Activated B cell treated with CpG ODN at 0.5 μM for 24 hours (primary cell): ENCODE measurements at regions of chr19 and their contacts with region 1.

Region 1: GRCh38 chr19:13774217-13775191 is at the start of gene C19orf53:
- DNase-seq: peak; percentile 86
- ATAC-seq: peak; percentile 99
- H3K4me3 Mint-ChIP-seq: peak within 1 kb of the TSS; percentile 100
- H3K27ac Mint-ChIP-seq: peak within 1 kb of the TSS; percentile 95
- H3K4me1 Mint-ChIP-seq: peaks cover 26% of the 10 kb centered on the region
- H3K27me3 Mint-ChIP-seq: no peaks in the 10 kb centered on the region
- CTCF ChIP-seq: no peak
- total RNA-seq, gene C19orf53: 74.9 and 76.1 TPM in 2 replicates

Region 2: DNA sequence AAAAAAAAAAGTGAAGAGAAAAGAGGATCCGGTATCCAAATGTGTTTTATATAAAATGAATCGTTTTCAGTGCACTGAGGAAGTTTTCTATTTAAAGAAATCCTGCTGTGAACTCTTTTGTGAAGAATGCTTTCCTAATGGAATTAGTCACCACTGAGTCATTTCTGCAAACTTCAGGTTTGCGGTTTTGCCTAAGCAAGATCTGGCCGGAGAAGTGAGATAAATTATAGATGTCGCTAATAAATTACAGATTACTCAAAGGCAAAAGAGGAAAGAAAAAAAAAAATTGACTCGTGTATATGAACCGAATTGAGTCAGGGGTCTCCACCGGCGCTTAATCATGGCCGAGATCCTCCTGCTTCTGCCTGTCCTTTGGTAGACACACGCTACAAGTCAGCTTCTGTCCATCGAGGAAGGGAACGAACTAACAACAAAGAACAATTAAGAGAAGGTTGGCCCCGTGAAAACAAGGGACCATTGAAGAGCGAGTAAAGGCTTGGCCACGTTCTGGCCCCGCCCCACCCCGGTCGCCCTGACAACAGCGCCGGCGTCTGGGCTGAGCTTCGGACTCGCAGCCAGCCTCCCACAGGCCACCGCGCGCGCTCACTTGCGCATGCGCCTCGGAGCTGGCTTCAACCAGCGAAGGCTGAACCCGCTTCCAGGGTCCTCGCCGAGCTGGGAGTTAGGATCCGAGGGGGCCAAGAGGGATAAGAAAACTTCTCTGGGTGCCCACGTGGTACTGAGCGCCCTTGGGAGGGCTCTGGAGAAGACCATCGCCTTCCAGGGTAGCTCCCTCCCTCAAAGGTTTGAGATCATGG is 43.1 kb before region 1 on chr19:
- CTCF ChIA-PET with region 1: no interaction called
- POLR2A ChIA-PET with region 1: interaction called, 8 read pairs
- intact Hi-C with region 1: loop called (anchors 1 kb)
- DNase-seq: peak; percentile 96
- ATAC-seq: peak; percentile 100
- H3K4me3 Mint-ChIP-seq: peak overlapping the region; percentile 90
- H3K27ac Mint-ChIP-seq: peak overlapping the region; percentile 93
- H3K4me1 Mint-ChIP-seq: peaks cover 21% of the 10 kb centered on the region
- H3K27me3 Mint-ChIP-seq: no peaks in the 10 kb centered on the region
- CTCF ChIP-seq: no peak

Region 3: DNA sequence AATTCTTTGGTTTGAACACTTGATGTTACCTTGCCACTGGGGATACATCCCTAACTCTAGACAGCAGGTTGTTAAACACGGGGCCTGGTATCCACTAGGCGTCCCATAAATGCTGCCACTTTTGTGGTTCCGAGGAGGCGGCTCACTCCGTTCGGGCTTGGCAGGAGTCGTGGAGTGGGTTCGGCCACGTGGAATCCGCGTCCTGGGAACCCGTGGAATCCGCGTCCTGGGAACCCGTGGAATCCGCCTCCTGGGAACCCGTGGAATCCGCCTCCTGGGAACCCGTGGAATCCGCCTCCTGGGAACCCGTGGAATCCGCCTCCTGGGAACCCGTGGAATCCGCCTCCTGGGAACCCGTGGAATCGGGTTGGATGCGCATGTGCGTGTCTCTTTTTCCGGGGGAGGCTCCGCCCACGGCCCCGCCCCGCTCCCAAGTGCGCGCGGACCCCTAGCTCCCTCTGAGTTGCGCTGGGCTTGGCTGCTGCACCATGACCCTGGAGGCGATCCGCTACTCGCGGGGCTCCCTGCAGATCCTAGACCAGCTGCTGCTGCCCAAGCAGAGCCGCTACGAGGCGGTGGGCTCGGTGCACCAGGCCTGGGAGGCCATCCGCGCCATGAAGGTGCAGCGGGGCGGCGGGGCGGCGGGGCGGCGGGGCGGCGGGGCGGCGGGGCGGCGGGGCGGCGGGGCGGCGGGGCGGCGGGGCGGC is 10.2 kb before region 1 on chr19 and contains the start of gene MRI1:
- CTCF ChIA-PET with region 1: no interaction called
- POLR2A ChIA-PET with region 1: interaction called, 14 read pairs
- intact Hi-C with region 1: loop called (anchors 1 kb)
- DNase-seq: peak; percentile 70
- ATAC-seq: peak; percentile 84
- H3K4me3 Mint-ChIP-seq: peak within 1 kb of the TSS; percentile 86
- H3K27ac Mint-ChIP-seq: peak within 1 kb of the TSS; percentile 70
- H3K4me1 Mint-ChIP-seq: peaks cover 16% of the 10 kb centered on the region
- H3K27me3 Mint-ChIP-seq: no peaks in the 10 kb centered on the region
- CTCF ChIP-seq: no peak
- total RNA-seq, gene MRI1: 32.5 and 37.5 TPM in 2 replicates

Region 4: DNA sequence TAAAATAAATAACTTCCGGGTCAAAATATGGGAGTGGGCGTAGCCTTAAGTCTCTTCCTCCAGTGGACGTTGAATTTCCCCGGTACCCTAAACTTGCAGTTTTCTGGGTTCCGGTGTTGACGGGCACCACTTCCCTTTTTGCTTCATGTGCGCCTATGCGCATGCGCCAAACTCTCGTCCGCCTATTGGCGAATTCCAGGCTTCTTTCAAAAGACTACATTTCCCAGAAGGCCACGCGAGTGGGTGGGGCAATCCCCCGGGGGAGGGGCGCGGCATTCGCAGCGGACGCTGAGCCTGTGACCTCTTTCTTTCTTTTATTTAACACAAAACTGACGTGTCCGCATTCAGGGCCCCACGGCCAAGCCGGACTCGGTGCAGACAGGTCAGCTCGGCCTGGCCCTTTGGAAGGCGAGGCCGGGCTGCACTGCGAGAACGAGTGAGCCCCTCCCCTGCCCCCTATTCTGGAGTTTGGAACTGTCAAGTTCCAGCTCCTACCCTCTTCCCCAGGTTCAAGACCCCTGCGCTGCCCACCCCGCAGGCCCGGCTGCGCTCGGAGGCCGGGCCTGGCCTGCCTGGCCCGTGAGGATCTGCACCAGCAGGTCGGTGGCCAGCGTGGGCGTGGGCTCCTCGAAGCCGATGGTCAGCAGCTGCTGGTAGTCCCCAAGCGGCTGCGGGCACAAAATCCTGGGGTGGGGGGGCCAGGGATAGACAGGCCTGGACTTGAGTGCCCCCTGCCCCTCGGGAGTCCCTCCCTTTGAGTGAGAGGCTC is 307.0 kb after region 1 on chr19:
- CTCF ChIA-PET with region 1: no interaction called
- POLR2A ChIA-PET with region 1: no interaction called
- intact Hi-C with region 1: loop called (anchors 2 kb)
- DNase-seq: peak; percentile 98
- ATAC-seq: peak; percentile 91
- H3K4me3 Mint-ChIP-seq: peak overlapping the region; percentile 94
- H3K27ac Mint-ChIP-seq: peak overlapping the region; percentile 95
- H3K4me1 Mint-ChIP-seq: peaks cover 17% of the 10 kb centered on the region
- H3K27me3 Mint-ChIP-seq: no peaks in the 10 kb centered on the region
- CTCF ChIP-seq: no peak